ENCODE measurements at regions of chr7 and their contacts with region 1.

Region 1: GRCh38 chr7:33932832-33933468 is 27.6 kb downstream of the BMPER start:
- DNase-seq: peak; percentile 78 to 89
- ATAC-seq: peak; percentile 85 to 94 (median 90)
- H3K4me3 ChIP-seq: peak overlapping the region; percentile 51
- H3K27ac ChIP-seq: no peak overlapping the region
- H3K4me1 ChIP-seq: peaks cover 11% of the 10 kb centered on the region
- H3K27me3 ChIP-seq: no peaks in the 10 kb centered on the region
- CTCF ChIP-seq: peak; percentile 98

Region 2: DNA sequence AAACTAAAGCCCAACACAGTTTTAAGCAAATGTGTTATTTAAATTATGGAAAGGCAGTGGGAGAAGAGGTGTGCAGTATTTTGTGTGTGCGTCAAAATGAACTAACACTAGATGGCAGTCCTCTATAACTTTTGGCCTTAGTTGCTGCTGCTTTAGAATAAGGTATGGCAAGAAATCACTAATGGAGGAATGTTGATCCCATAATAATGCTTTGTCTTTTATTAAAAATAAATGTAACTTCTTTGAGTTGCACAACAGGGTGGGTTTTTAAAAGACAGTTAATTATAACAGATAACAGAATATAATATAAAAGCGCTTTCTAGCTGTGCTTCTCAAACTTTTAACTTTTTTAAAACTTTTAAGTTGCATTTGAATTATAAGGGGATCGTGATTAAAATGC is 747.2 kb before region 1 on chr7:
- intact Hi-C with region 1: loop called (anchors 10 kb)
- DNase-seq: no peak
- ATAC-seq: peak in 2 of 4 donors; percentile 55 to 67
- H3K4me3 ChIP-seq: no peak overlapping the region
- H3K27ac ChIP-seq: no peak overlapping the region
- H3K4me1 ChIP-seq: no peaks in the 10 kb centered on the region
- H3K27me3 ChIP-seq: no peaks in the 10 kb centered on the region
- CTCF ChIP-seq: peak; percentile 61

Region 3: DNA sequence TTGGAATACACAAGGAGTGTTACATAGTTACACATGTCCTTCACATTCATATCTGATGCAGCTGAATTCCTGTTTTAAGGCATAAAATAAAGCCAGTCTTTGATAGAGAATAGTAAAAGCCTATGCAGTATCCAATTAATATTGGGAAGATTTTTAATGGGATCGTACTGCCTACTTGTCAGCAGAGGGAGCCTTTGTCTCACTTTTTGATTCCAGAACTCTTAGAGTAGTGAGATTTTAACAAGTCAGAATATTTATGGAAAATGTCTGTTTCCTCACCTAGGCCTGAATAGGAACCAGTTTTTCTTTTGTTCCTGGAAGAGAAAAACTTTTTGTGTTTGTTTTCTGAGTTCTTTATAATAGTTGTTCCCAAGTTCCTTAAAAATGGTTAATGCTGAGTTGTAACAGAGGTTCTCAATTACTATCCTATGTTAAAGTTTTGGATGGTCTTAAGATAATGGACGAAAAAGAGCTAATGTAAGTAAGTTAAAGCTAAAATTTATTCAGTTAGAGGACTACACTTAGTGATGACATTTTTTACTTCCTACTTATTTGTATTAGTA is 689.5 kb before region 1 on chr7:
- intact Hi-C with region 1: loop called (anchors 5 to 10 kb)
- DNase-seq: no peak
- ATAC-seq: peak in 3 of 4 donors; percentile 42 to 72 (median 43)
- H3K4me3 ChIP-seq: no peak overlapping the region
- H3K27ac ChIP-seq: no peak overlapping the region
- H3K4me1 ChIP-seq: no peaks in the 10 kb centered on the region
- H3K27me3 ChIP-seq: no peaks in the 10 kb centered on the region
- CTCF ChIP-seq: peak; percentile 64

Region 4: DNA sequence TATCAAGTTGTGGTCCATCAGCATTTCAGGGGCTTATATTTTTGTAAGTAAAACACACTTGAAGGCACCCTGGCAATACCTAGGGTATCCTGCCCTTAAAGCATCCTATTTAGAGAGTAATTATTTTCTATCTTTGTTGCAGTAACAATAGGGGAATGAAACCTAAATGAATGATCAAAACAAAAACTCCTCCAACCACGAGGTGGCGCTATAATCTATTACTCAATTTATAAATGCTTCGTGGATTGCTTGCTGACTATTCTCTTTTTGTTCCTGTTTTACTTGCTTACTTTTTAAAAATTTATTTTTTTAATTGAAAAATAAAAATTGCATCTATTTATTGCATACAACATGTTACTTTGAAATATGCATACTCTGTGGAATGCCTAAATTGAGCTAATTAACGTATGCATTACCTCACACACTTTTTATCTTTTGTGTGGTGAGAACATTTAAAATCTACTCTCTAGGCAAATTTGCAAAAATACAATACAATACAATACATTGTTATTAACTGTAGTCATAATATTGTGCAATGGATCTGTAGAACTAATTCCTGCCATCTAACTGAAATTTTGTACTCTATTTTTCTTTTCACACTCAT is 175.3 kb before region 1 on chr7:
- intact Hi-C with region 1: loop called in 1 of 2 experiments (anchors 2 kb)
- DNase-seq: no peak
- ATAC-seq: peak in 2 of 4 donors; percentile 39 to 60
- H3K4me3 ChIP-seq: no peak overlapping the region
- H3K27ac ChIP-seq: no peak overlapping the region
- H3K4me1 ChIP-seq: peaks cover 15% of the 10 kb centered on the region
- H3K27me3 ChIP-seq: no peaks in the 10 kb centered on the region
- CTCF ChIP-seq: peak; percentile 74

Region 5: GRCh38 chr7:33873981-33874753 is 58.8 kb before region 1 on chr7:
- intact Hi-C with region 1: no loop called
- DNase-seq: no peak
- ATAC-seq: no peak
- H3K4me3 ChIP-seq: no peak overlapping the region
- H3K27ac ChIP-seq: no peak overlapping the region
- H3K4me1 ChIP-seq: no peaks in the 10 kb centered on the region
- H3K27me3 ChIP-seq: no peaks in the 10 kb centered on the region
- CTCF ChIP-seq: no peak